ENCODE measurements at regions of chr18 and their contacts with region 1.

Region 1: DNA sequence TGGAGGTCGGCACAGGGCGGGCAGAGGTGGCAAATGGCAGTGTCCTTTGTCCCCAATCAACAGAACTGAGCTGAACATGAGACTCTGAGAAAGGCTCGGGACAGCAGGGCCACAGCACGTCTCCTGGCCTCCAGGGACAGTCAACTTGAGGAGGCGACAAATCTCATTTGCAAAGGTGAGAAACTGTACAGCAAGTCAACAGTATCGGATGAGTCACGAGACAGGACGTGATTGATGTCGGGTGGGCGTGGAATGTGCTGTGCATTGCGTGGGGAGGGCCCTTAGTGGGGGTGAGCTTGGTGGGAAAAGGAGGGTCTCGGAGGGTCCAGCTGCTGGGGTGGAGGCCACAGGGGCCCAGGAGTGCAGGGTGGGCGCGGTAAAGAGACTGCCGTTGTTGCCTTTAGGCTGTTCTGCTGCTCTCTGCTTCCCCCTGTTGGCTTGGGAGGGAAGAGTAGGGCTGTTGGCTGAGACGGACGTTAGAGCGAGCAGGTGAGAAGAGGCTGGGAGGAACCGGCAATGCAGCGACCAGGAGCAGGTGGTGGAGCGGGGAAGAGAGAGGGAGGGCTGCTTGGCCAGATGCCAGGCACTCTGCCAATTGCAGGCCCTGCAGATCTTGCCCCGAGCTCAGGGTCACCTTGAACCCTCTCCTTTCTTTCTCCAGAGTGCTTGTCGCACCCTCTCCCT is 164.3 kb downstream of the BCL2 start:
- DNase-seq: peak; percentile 92
- ATAC-seq: peak; percentile 62
- H3K4me3 Mint-ChIP-seq: peak overlapping the region; percentile 85
- H3K27ac Mint-ChIP-seq: peak overlapping the region; percentile 99
- H3K4me1 Mint-ChIP-seq: peaks cover 97% of the 10 kb centered on the region
- H3K27me3 Mint-ChIP-seq: no peaks in the 10 kb centered on the region
- CTCF ChIP-seq: peak; percentile 91

Region 2: GRCh38 chr18:63131106-63131958 is 24.0 kb before region 1 on chr18:
- CTCF ChIA-PET with region 1: interaction called, 21 read pairs
- POLR2A ChIA-PET with region 1: interaction called, 6 read pairs
- intact Hi-C with region 1: no loop called
- DNase-seq: peak; percentile 79
- ATAC-seq: peak; percentile 59
- H3K4me3 Mint-ChIP-seq: no peak overlapping the region
- H3K27ac Mint-ChIP-seq: peak overlapping the region; percentile 79
- H3K4me1 Mint-ChIP-seq: peaks cover 41% of the 10 kb centered on the region
- H3K27me3 Mint-ChIP-seq: no peaks in the 10 kb centered on the region
- CTCF ChIP-seq: peak; percentile 83

Region 3: DNA sequence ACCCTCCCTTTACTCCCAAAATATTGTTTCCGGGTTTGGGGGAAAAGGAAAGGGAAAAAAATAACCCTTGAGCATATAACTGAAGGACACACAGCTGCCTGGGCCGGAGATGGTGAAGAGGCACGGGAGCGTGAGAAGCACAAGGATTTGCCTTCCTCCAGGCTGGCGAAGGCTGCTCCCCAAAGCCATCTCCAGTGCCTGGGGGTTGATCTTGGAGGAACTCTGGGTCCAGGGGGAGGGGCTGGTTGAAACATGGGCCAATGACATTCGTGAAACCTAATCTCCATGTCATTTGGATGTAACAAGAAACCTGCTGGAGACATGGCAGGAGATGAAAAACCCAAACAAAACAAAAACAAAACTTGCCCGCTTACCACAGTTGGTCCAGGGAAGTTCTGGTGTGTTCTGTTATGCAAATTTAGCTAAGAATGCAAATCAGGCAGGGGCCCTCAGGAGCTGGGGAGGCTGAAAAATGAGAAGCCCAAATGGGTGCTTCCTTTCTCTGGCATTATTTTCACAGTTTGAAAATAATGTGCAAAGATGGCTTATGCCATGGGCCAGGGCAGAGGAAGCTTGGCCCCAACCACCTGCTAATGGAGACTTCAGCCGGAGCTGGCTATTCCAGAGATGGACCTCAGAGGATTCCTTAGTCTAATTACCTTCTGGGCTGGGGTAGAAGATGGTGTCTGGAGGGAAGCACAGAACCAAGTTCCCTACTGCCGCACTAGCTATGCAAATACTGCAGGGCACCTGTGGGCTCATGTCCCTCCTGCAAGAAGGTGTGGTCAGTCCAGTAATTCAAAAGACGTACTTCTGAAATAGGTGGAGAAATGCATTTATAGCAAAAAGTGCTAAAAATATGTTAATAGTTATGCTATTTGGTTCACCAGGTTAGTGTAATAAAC is 16.6 kb before region 1 on chr18:
- CTCF ChIA-PET with region 1: interaction called, 20 read pairs
- POLR2A ChIA-PET with region 1: interaction called, 59 read pairs
- intact Hi-C with region 1: loop called (anchors 2 kb)
- DNase-seq: peak; percentile 36
- ATAC-seq: peak; percentile 21
- H3K4me3 Mint-ChIP-seq: peak overlapping the region; percentile 75
- H3K27ac Mint-ChIP-seq: peak overlapping the region; percentile 88
- H3K4me1 Mint-ChIP-seq: peaks cover 66% of the 10 kb centered on the region
- H3K27me3 Mint-ChIP-seq: no peaks in the 10 kb centered on the region
- CTCF ChIP-seq: no peak

Region 4: DNA sequence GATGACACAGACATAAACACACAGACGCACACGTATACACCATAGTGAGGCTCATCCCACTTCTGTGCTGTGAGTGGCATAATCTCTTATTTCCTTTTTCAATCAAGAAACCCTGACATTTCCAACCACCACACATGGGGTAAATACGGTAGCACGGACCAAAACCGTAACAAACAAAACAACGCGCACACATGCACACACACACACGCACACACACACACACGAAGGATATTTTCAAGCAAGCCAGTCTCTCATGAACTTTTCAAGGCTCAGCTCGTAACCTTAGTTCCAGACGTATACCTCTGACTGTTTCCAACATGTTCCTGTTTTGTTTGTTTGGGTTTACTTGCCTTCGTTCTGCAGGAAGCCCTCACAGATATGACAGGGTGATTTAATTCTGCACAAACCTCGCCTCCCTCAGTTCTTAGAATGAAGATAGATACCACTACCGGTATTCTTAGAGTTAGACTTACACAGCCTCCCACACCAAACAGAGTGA is 44.5 kb after region 1 on chr18:
- CTCF ChIA-PET with region 1: interaction called, 16 read pairs
- POLR2A ChIA-PET with region 1: interaction called, 50 read pairs
- intact Hi-C with region 1: loop called (anchors 2 kb)
- DNase-seq: peak; percentile 69
- ATAC-seq: peak; percentile 80
- H3K4me3 Mint-ChIP-seq: no peak overlapping the region
- H3K27ac Mint-ChIP-seq: no peak overlapping the region
- H3K4me1 Mint-ChIP-seq: peaks cover 47% of the 10 kb centered on the region
- H3K27me3 Mint-ChIP-seq: no peaks in the 10 kb centered on the region
- CTCF ChIP-seq: no peak

Region 5: GRCh38 chr18:63207143-63207790 is 52.0 kb after region 1 on chr18:
- CTCF ChIA-PET with region 1: interaction called, 4 read pairs
- POLR2A ChIA-PET with region 1: interaction called, 29 read pairs
- intact Hi-C with region 1: loop called (anchors 2 kb)
- DNase-seq: peak; percentile 75
- ATAC-seq: peak; percentile 62
- H3K4me3 Mint-ChIP-seq: peak overlapping the region; percentile 72
- H3K27ac Mint-ChIP-seq: peak overlapping the region; percentile 84
- H3K4me1 Mint-ChIP-seq: peaks cover 94% of the 10 kb centered on the region
- H3K27me3 Mint-ChIP-seq: no peaks in the 10 kb centered on the region
- CTCF ChIP-seq: no peak

Region 6: DNA sequence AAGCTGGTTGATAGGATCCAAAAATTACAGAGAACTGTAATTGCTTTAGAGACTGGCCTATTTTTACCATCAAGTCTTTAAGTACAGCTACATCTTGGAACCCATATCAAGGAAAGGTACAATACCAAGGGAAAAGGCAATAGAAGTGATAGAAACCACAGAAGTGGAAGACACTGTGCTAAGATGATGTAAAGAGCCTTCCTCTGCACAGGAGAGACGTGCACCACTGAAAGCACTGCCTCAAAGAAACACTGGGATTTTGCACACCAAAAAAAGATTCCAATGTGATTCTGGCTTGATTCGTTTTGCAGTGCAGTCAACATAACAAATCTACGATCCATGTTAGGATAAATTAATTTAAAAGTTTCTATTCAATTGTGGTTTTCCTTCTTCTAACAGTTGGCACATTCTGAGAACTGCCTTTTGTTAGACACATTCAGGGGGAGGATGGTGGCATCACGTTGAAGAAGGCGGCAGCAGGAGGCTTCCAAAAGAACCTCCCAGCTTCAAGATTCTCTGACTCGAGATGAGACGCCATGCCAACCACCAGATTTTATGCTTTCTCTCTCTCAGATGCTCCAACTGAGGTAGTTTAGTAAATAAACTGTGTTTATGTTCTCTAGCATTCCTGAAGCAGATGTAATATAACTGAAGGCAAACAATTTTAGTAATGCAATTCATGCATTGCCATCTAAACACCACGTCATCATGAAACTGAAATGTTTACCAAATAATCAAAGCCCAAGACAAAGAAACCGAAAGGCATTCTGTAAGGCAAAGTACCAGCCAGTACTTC is 61.4 kb after region 1 on chr18:
- CTCF ChIA-PET with region 1: interaction called, 4 read pairs
- POLR2A ChIA-PET with region 1: interaction called, 29 read pairs
- intact Hi-C with region 1: loop called (anchors 2 kb)
- DNase-seq: peak; percentile 65
- ATAC-seq: peak; percentile 31
- H3K4me3 Mint-ChIP-seq: peak overlapping the region; percentile 53
- H3K27ac Mint-ChIP-seq: peak overlapping the region; percentile 92
- H3K4me1 Mint-ChIP-seq: peaks cover 94% of the 10 kb centered on the region
- H3K27me3 Mint-ChIP-seq: no peaks in the 10 kb centered on the region
- CTCF ChIP-seq: no peak

Region 7: GRCh38 chr18:63299837-63300745 is 144.8 kb after region 1 on chr18:
- CTCF ChIA-PET with region 1: interaction called, 3 read pairs
- POLR2A ChIA-PET with region 1: interaction called, 4 read pairs
- intact Hi-C with region 1: loop called (anchors 5 kb)
- DNase-seq: peak; percentile 83
- ATAC-seq: peak; percentile 77
- H3K4me3 Mint-ChIP-seq: peak overlapping the region; percentile 32
- H3K27ac Mint-ChIP-seq: peak overlapping the region; percentile 89
- H3K4me1 Mint-ChIP-seq: peaks cover 81% of the 10 kb centered on the region
- H3K27me3 Mint-ChIP-seq: no peaks in the 10 kb centered on the region
- CTCF ChIP-seq: no peak